ENCODE measurements at regions of chr5 and their contacts with region 1.

Region 1: GRCh38 chr5:75336625-75337339 is at the start of gene HMGCR:
- DNase-seq: peak; percentile 99
- H3K4me3 Mint-ChIP-seq: no peak within 1 kb of the TSS
- H3K27ac Mint-ChIP-seq: no peak within 1 kb of the TSS
- H3K4me1 Mint-ChIP-seq: peaks cover 32% of the 10 kb centered on the region
- H3K27me3 Mint-ChIP-seq: no peaks in the 10 kb centered on the region
- CTCF ChIP-seq: no peak
- total RNA-seq, gene HMGCR: 47.7 and 59.9 TPM in 2 replicates

Region 2: GRCh38 chr5:74766849-74767578 is 569.8 kb before region 1 on chr5 and contains the starts of genes GFM2 and NSA2:
- CTCF ChIA-PET with region 1: no interaction called
- POLR2A ChIA-PET with region 1: interaction called, 13 read pairs
- intact Hi-C with region 1: loop called (anchors 10 kb)
- DNase-seq: peak; percentile 94
- H3K4me3 Mint-ChIP-seq: peak within 1 kb of the TSS; percentile 98
- H3K27ac Mint-ChIP-seq: peak within 1 kb of the TSS; percentile 92
- H3K4me1 Mint-ChIP-seq: peaks cover 20% of the 10 kb centered on the region
- H3K27me3 Mint-ChIP-seq: no peaks in the 10 kb centered on the region
- CTCF ChIP-seq: no peak
- total RNA-seq, gene GFM2: 26.4 and 31.9 TPM in 2 replicates
- total RNA-seq, gene NSA2: 84.9 and 106 TPM in 2 replicates

Region 3: GRCh38 chr5:75053304-75054133 is 283.3 kb before region 1 on chr5:
- CTCF ChIA-PET with region 1: interaction called, 6 read pairs
- POLR2A ChIA-PET with region 1: interaction called, 20 read pairs
- intact Hi-C with region 1: loop called (anchors 1 kb)
- DNase-seq: peak; percentile 67
- H3K4me3 Mint-ChIP-seq: peak overlapping the region; percentile 87
- H3K27ac Mint-ChIP-seq: peak overlapping the region; percentile 79
- H3K4me1 Mint-ChIP-seq: peaks cover 25% of the 10 kb centered on the region
- H3K27me3 Mint-ChIP-seq: no peaks in the 10 kb centered on the region
- CTCF ChIP-seq: peak; percentile 19

Region 4: DNA sequence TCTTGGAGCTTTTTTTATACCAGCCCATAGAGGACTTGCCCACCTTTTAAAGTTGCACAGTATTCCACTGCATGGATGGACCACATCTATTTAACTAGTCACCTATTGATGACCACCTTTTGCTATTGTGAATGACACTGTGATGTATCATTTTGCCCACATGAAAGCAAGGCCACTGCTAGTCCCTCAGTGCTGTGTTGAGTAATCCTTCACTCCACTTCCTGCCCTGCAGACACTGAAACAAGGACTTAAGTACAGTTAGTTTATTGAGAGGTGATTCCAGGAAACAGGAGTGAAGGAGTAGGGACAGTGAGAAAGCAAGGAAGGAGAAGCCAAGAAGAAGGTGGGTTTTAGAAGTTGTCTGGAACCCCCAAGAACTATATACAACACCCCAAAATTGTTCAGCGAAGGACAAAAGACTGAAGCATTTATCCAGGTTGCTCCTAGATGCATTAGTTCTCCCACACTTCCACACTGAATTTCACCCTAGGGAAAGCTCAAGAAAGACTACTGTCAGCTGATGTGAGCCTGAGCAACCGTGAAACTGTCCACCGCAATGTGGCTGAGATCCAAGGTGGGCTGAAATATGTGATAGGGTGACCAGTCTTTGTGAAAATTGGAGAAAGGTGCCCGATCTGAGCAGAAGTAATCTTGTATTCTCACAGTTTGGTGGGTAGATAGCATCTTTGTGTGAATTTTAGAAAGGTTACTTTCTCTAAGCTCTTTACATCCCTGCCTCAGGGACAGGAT is 54.9 kb before region 1 on chr5:
- CTCF ChIA-PET with region 1: interaction called, 17 read pairs
- POLR2A ChIA-PET with region 1: interaction called, 124 read pairs
- intact Hi-C with region 1: loop called (anchors 2 kb)
- DNase-seq: peak; percentile 10
- H3K4me3 Mint-ChIP-seq: no peak overlapping the region
- H3K27ac Mint-ChIP-seq: no peak overlapping the region
- H3K4me1 Mint-ChIP-seq: peaks cover 23% of the 10 kb centered on the region
- H3K27me3 Mint-ChIP-seq: no peaks in the 10 kb centered on the region
- CTCF ChIP-seq: no peak

Region 5: GRCh38 chr5:75351139-75351926 is 14.6 kb after region 1 on chr5:
- CTCF ChIA-PET with region 1: interaction called, 6 read pairs
- POLR2A ChIA-PET with region 1: interaction called, 24 read pairs
- intact Hi-C with region 1: no loop called
- DNase-seq: no peak
- H3K4me3 Mint-ChIP-seq: no peak overlapping the region
- H3K27ac Mint-ChIP-seq: no peak overlapping the region
- H3K4me1 Mint-ChIP-seq: no peaks in the 10 kb centered on the region
- H3K27me3 Mint-ChIP-seq: no peaks in the 10 kb centered on the region
- CTCF ChIP-seq: no peak

Region 6: GRCh38 chr5:75511435-75512384 is 174.9 kb after region 1 on chr5 and contains the starts of genes CERT1 and POLK:
- CTCF ChIA-PET with region 1: no interaction called
- POLR2A ChIA-PET with region 1: interaction called, 52 read pairs
- intact Hi-C with region 1: loop called (anchors 2 kb)
- DNase-seq: peak; percentile 98
- H3K4me3 Mint-ChIP-seq: peak within 1 kb of the TSS; percentile 79
- H3K27ac Mint-ChIP-seq: peak within 1 kb of the TSS; percentile 96
- H3K4me1 Mint-ChIP-seq: peaks cover 28% of the 10 kb centered on the region
- H3K27me3 Mint-ChIP-seq: no peaks in the 10 kb centered on the region
- CTCF ChIP-seq: no peak
- total RNA-seq, gene CERT1: 19.6 and 21.7 TPM in 2 replicates
- total RNA-seq, gene POLK: 30.2 and 34.9 TPM in 2 replicates

Region 7: GRCh38 chr5:75681125-75681830 is 344.5 kb after region 1 on chr5:
- CTCF ChIA-PET with region 1: no interaction called
- POLR2A ChIA-PET with region 1: interaction called, 4 read pairs
- intact Hi-C with region 1: loop called (anchors 1 kb)
- DNase-seq: peak; percentile 46
- H3K4me3 Mint-ChIP-seq: peak overlapping the region; percentile 57
- H3K27ac Mint-ChIP-seq: peak overlapping the region; percentile 12
- H3K4me1 Mint-ChIP-seq: no peaks in the 10 kb centered on the region
- H3K27me3 Mint-ChIP-seq: no peaks in the 10 kb centered on the region
- CTCF ChIP-seq: peak; percentile 68

Region 8: DNA sequence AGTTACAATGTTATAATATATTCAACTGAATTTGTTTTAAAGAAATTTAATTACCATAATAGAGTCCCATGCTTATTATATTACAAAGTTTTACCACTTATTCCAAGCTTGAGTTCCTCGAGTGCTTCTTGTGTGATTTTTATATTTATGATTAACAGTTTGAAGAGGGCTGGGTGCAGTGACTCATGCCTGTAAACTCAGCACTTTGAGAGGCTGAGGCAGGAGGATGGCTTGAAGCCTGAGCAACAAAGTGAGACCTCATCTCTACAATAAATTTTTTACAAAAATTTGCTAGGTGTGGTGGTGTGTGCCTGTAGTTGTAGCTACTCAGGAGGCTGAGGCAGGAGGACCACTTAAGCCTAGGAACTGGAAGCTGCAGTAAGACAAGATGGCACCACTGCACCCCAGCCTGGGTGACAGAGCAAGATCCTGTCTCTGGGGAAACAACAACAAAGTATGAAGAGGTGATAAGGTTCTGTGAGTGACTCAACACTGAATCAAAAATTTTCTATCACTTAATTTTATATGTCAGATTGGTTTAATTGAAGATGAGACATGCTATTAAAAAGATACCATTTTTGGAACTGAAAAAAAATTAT is 371.2 kb after region 1 on chr5:
- CTCF ChIA-PET with region 1: no interaction called
- POLR2A ChIA-PET with region 1: no interaction called
- intact Hi-C with region 1: no loop called
- DNase-seq: peak; percentile 4
- H3K4me3 Mint-ChIP-seq: no peak overlapping the region
- H3K27ac Mint-ChIP-seq: no peak overlapping the region
- H3K4me1 Mint-ChIP-seq: no peaks in the 10 kb centered on the region
- H3K27me3 Mint-ChIP-seq: no peaks in the 10 kb centered on the region
- CTCF ChIP-seq: no peak

Region 9: DNA sequence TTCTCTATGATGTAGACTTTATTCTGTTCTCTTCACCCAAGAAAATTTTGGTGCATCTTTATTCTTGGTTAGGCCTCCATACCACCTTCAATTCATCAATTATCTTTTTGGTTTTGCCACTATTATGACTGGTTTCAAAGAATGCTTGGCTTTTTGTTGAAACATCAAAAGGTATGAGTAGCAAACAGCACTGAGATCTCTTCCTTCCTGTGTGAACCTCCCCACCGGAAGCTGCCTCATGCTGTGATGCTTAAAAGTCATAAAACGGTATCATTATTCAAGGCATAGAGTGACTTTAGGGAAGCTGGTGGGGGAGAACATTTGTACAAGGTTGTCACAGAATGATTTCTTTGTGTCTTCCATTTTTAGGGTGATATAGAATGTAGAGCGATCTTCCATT is 1136.9 kb after region 1 on chr5:
- CTCF ChIA-PET with region 1: no interaction called
- POLR2A ChIA-PET with region 1: no interaction called
- intact Hi-C with region 1: no loop called
- DNase-seq: no peak
- H3K4me3 Mint-ChIP-seq: no peak overlapping the region
- H3K27ac Mint-ChIP-seq: no peak overlapping the region
- H3K4me1 Mint-ChIP-seq: peaks cover 22% of the 10 kb centered on the region
- H3K27me3 Mint-ChIP-seq: no peaks in the 10 kb centered on the region
- CTCF ChIP-seq: no peak

Measured in MCF 10A (cell line).